ENCODE measurements at regions of chr22 and their contacts with region 1.

Region 1: GRCh38 chr22:20116951-20117645 is at the start of gene TRMT2A:
- DNase-seq: peak; percentile 92 to 98
- H3K4me3 ChIP-seq: peak within 1 kb of the TSS; percentile 89 to 99 (median 98)
- H3K27ac ChIP-seq: peak within 1 kb of the TSS; percentile 93
- H3K4me1 ChIP-seq: peaks cover 0 to 12% (median 5%) of the 10 kb centered on the region in 4 experiments; a peak in 5 of 7 replicates
- H3K27me3 ChIP-seq: no peaks in the 10 kb centered on the region
- CTCF ChIP-seq: peak; percentile 19 to 23 (median 23)
- EP300 ChIP-seq: peak in 1 of 2 experiments; percentile 3; a peak in 1 of 3 replicates
- POLR2A ChIP-seq: peak; percentile 22 to 44; a peak in 2 of 3 replicates
- RAD21 ChIP-seq: no peak
- total RNA-seq, gene TRMT2A: 44.9 and 47.9 TPM in 2 replicates

Region 2: DNA sequence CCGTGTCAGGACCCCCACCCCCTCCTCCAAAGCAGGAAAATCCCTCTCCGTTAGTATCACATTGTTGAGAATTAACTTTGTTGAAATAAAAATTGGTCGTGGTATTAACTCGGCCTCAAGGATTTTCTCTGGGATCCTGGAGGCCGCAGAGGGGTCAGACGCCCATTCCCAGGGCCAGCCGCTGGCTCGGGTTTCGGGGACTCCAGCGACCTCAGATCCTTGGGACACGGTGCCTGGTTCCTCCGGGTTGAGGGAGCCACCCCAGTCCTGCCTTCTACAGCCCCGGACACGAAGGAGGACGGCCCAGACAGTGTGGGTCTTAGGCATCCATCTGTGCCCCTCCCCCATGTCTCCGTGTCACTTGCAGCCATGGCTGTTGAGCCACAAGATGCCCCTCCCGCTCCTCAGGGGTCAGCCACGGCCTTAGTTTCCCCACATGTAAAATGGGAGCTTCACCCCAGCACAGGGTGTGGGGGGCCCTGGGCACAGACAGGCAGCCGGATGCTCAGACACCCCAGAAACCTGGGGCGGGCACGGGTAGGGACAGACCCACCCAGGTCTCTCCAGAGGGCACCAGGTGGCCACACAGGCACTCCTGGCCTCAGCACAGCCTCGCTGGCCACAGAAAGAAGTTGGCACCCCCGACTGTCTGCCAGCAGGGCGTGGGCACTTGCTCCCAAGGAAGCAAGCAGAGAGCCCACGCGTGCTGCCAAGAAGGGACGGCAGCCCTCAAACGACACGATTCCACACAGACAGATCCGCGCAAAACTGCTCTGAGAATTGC is 378.2 kb before region 1 on chr22:
- CTCF ChIA-PET with region 1: no interaction called
- POLR2A ChIA-PET with region 1: no interaction called
- DNase-seq: no peak
- H3K4me3 ChIP-seq: no peak overlapping the region
- H3K27ac ChIP-seq: no peak overlapping the region
- H3K4me1 ChIP-seq: peaks cover 0 to 12% (median 6%) of the 10 kb centered on the region in 4 experiments; a peak in 5 of 7 replicates
- H3K27me3 ChIP-seq: no peaks in the 10 kb centered on the region; a peak in 1 of 7 replicates
- CTCF ChIP-seq: no peak
- EP300 ChIP-seq: no peak
- POLR2A ChIP-seq: no peak
- RAD21 ChIP-seq: no peak

Region 3: DNA sequence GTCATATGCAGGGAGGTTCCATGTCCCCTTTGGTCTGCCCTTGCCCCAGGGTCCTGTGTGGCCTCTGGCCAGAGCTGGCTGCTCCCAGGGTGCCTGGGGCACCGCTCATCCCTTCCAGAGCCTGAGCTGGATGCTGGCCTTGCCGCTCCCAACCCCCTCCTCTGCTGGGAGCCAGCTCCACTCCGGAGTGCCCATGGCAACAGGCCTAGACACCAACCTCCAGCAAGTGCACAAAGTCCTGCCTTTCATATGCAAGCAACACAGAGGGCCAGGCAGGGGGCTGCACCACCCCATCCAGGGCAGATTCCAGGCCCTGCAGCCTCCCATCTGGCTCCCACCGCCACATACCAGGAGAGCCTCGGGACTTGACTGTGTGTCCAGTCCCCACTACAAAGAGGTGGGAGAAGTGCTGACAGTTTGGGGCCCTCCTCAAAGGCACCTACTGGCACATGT is 116.9 kb before region 1 on chr22:
- CTCF ChIA-PET with region 1: no interaction called
- POLR2A ChIA-PET with region 1: no interaction called
- DNase-seq: no peak
- H3K4me3 ChIP-seq: no peak overlapping the region
- H3K27ac ChIP-seq: no peak overlapping the region
- H3K4me1 ChIP-seq: peaks cover 4 to 31% (median 18%) of the 10 kb centered on the region in 4 experiments
- H3K27me3 ChIP-seq: no peaks in the 10 kb centered on the region
- CTCF ChIP-seq: no peak
- EP300 ChIP-seq: no peak
- POLR2A ChIP-seq: no peak
- RAD21 ChIP-seq: no peak

Region 4: DNA sequence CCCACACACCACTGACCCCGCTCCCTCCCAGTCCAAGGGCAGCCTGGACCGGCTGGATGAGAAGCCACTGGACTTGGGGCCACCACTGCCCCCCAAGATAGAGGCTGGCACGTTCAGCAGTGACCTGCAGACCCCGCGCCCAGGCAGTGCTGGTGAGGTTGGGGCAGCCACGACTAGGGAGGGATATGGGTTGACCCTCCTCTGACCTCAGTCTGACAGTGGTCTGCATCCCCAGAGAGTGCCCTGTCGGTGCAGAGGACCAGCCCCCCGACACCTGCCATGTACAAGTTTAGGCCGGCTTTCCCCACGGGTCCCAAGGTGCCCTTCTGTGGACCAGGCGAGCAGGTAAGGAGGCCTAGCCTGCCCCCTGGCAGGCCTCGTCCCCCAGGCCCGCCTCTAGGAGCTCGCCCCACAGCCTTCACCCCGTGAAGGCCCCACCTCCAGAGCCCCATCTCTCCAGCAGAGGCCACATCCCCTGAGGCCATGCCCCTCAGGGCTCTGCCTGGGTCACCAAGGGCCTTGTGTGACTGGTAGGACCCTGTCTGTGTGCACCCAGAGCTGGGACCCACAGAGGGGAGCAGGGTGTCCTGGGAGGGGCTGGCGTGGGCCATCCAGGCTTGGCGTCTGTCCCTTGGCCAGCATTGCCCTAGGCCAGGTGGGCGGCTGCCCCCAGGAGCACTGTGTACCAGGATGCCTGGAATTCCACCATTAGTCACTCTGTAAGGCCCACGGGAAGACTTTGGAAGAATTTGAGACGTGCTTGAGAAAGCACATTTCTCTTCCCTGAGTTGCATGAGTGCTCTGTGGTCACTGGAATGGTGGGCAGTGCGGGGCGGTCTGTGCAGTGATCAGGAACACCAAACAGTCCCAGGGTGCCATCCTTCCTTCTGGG is 24.3 kb after region 1 on chr22:
- CTCF ChIA-PET with region 1: no interaction called
- POLR2A ChIA-PET with region 1: interaction called, 40 read pairs
- DNase-seq: no peak
- H3K4me3 ChIP-seq: no peak overlapping the region
- H3K27ac ChIP-seq: no peak overlapping the region
- H3K4me1 ChIP-seq: no peaks in the 10 kb centered on the region
- H3K27me3 ChIP-seq: no peaks in the 10 kb centered on the region
- CTCF ChIP-seq: no peak
- EP300 ChIP-seq: no peak
- POLR2A ChIP-seq: no peak
- RAD21 ChIP-seq: no peak

Measured in H1 (cell line).